B cell (primary cell): ENCODE measurements at regions of chr4 and their contacts with region 1.

Region 1: DNA sequence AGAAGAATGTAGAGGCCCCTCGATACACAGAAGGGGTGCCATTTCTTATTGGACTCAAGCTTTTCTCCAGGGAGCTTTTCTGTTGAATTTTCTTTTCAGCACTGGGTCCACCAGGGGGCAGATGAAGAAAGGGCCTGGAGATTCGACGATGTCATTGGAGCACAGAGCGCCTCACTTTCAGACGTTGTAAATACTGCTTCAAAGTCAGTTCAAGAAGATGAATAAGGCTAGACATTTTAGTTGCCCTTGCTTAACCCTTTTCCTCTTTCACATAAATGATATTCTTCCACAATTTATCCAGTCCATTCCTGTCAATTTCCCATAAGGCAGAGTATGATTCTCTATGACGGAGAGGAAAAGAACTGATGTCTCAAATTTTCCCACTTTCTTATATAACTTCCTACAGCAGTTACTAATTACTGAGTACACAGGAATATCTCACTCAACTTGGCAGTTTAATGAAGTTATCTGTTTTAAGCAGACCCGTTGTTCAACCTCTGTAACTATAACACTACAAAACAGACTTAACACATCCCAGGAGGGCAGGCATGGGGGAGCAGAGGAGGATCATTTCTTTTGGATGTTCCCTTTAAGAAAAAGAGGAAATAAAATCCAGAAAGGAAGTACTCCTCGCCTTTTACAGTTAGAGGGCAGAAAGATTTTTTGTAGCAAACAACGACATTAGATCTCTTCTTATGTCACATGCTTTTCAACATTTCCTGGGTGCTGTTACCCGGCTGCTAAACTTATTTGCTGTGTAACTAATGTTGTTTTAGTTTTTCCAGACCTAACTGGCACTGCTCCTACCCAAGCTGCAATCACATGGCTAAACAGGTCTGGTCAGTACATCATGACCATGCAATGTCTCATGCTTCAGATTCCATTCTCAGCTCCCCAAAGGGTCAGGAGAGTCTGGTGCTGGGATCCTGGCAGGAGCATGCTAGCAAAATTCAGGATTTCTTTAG is 12.2 kb upstream of the CENPU start:
- DNase-seq: peak; percentile 79
- ATAC-seq: peak; percentile 90
- H3K4me3 ChIP-seq: no peak overlapping the region
- H3K4me3 Mint-ChIP-seq: peak overlapping the region; percentile 55
- H3K27ac ChIP-seq: no peak overlapping the region
- H3K27ac Mint-ChIP-seq: peak overlapping the region; percentile 53
- H3K4me1 ChIP-seq: peaks cover 8 to 12% of the 10 kb centered on the region in 2 donors
- H3K4me1 Mint-ChIP-seq: peaks cover 11% of the 10 kb centered on the region
- H3K27me3 ChIP-seq: no peaks in the 10 kb centered on the region
- H3K27me3 Mint-ChIP-seq: no peaks in the 10 kb centered on the region
- CTCF ChIP-seq: peak; percentile 82

Region 2: GRCh38 chr4:184733654-184734524 is 12.2 kb before region 1 on chr4 and contains the start of gene CENPU:
- CTCF ChIA-PET with region 1: interaction called, 25 read pairs
- POLR2A ChIA-PET with region 1: interaction called, 3 read pairs
- intact Hi-C with region 1: no loop called
- DNase-seq: peak; percentile 96
- ATAC-seq: peak; percentile 95
- H3K4me3 ChIP-seq: peak within 1 kb of the TSS; percentile 65 to 76 (median 72)
- H3K4me3 Mint-ChIP-seq: peak within 1 kb of the TSS; percentile 93
- H3K27ac ChIP-seq: peak within 1 kb of the TSS; percentile 1 to 52
- H3K27ac Mint-ChIP-seq: peak within 1 kb of the TSS; percentile 93
- H3K4me1 ChIP-seq: peaks cover 7 to 12% of the 10 kb centered on the region in 2 donors
- H3K4me1 Mint-ChIP-seq: peaks cover 16% of the 10 kb centered on the region
- H3K27me3 ChIP-seq: no peaks in the 10 kb centered on the region
- H3K27me3 Mint-ChIP-seq: no peaks in the 10 kb centered on the region
- CTCF ChIP-seq: no peak
- total RNA-seq, gene CENPU: 1.6 and 3.2 TPM in 2 replicates

Region 3: DNA sequence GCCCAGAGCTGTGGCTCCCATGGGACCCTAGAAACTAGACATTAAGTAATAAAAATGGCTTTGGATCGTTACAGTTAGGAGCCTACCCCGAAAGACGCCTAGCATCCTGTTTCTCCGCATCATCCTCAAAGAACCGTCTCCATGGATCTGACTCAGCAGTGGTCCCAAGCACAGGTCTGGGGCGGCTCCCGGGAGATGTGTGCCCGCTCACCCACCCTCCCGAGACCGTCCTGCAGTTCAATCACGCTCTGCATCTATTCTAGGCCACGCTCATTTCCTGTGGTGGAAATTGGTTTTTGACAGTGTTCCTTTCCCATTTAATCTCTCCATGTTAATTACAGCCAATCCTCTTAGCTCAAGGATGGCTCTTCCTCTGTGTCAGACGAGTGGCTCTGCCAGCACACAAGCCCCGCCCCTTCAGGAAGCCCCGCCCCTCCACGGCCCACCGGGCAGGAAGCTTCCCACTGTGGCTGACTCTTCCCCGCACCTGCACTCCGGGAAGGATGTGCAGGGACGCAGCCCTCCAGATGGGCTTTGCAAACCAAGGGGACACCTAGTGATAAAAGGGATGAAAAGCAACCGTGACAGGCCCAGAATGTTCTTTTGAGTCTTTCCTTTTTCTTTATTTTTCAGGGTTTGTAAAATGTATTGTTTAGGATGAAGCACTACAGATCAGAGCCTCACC is 237.7 kb after region 1 on chr4:
- CTCF ChIA-PET with region 1: interaction called, 24 read pairs
- POLR2A ChIA-PET with region 1: no interaction called
- intact Hi-C with region 1: loop called (anchors 1 kb)
- DNase-seq: peak; percentile 61
- ATAC-seq: peak; percentile 85
- H3K4me3 ChIP-seq: peak overlapping the region in 4 of 5 experiments; percentile 5 to 47 (median 14)
- H3K4me3 Mint-ChIP-seq: no peak overlapping the region
- H3K27ac ChIP-seq: no peak overlapping the region
- H3K27ac Mint-ChIP-seq: no peak overlapping the region
- H3K4me1 ChIP-seq: peaks cover 11 to 20% of the 10 kb centered on the region in 2 donors
- H3K4me1 Mint-ChIP-seq: no peaks in the 10 kb centered on the region
- H3K27me3 ChIP-seq: no peaks in the 10 kb centered on the region
- H3K27me3 Mint-ChIP-seq: peaks cover 8% of the 10 kb centered on the region
- CTCF ChIP-seq: peak; percentile 19

Region 4: DNA sequence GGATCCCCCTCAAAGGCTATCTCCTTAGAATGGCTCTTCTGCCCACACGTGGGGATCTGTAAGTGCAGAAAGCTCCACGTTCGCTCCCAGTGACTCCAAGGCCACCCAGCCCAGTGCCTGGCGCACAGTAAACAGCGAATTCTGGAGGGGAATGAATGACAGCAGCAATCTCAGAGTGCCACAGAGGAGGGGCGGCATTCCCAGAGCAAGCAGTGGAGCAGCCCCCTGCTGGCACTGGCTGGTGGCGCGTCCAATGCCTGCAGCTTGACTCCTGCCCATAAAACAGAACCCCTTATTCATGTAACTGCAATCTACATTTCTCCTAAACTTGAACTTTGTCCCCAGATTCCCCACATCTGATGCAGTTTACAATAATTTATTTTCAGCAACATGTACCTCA is 265.3 kb after region 1 on chr4:
- CTCF ChIA-PET with region 1: interaction called, 17 read pairs
- POLR2A ChIA-PET with region 1: no interaction called
- intact Hi-C with region 1: no loop called
- DNase-seq: no peak
- ATAC-seq: peak; percentile 45
- H3K4me3 ChIP-seq: no peak overlapping the region
- H3K4me3 Mint-ChIP-seq: no peak overlapping the region
- H3K27ac ChIP-seq: no peak overlapping the region
- H3K27ac Mint-ChIP-seq: no peak overlapping the region
- H3K4me1 ChIP-seq: peaks cover 0 to under 1% of the 10 kb centered on the region in 2 donors
- H3K4me1 Mint-ChIP-seq: peaks cover 3% of the 10 kb centered on the region
- H3K27me3 ChIP-seq: peaks cover 0 to 56% (median 21%) of the 10 kb centered on the region in 4 experiments
- H3K27me3 Mint-ChIP-seq: peaks cover 85% of the 10 kb centered on the region
- CTCF ChIP-seq: peak; percentile 55

Region 5: DNA sequence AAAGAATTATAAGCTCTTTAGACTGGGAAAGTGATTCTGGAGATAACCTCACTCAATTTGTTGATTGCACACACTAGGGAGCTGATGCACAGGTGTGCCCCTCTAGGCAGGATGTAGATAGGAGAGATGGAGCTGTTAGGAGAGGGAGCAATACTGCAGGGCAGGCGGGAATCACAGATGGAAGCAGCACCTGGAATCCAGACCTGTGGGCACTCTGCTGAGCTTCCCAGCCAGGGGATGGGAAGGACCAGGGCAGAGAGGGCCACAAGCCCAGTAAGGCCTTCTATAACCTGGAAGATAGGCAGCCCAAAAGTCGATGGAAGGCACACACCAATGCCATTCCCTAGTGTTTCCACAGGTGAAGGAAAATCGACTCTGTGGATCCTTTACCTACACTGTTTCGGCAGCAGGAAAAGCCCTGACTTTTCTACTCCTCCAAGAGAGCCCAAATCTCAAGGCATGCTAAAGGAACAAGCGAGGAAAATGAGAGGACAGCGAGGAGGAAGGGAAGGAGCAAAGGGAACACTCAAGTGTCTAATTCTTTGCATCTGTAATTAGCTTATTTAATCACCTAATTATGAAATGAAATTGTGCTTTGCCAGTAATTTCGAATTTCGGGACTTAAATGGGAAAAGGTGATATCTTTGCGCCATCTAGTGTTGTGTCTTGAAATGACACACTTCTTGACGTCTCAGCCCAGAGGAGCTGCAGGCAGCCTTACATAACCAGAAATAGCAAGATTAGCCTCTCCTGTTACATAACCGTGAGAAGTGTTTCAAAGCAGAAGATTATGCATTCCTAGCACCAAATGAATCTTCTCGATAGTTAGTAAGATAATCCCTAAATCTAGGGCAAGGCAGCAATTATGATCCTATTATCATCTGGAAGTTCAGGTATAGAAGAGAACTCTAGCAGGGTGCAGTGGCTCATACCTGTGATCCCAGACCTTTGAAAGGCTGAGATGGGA is 1291.9 kb after region 1 on chr4:
- CTCF ChIA-PET with region 1: interaction called, 3 read pairs
- POLR2A ChIA-PET with region 1: no interaction called
- intact Hi-C with region 1: loop called (anchors 10 kb)
- DNase-seq: peak; percentile 64
- ATAC-seq: peak; percentile 33
- H3K4me3 ChIP-seq: no peak overlapping the region
- H3K4me3 Mint-ChIP-seq: no peak overlapping the region
- H3K27ac ChIP-seq: no peak overlapping the region
- H3K27ac Mint-ChIP-seq: no peak overlapping the region
- H3K4me1 ChIP-seq: no peaks in the 10 kb centered on the region
- H3K4me1 Mint-ChIP-seq: no peaks in the 10 kb centered on the region
- H3K27me3 ChIP-seq: peaks cover 0 to 12% (median 3%) of the 10 kb centered on the region in 4 experiments
- H3K27me3 Mint-ChIP-seq: peaks cover 30% of the 10 kb centered on the region
- CTCF ChIP-seq: peak; percentile 74